Activated CD4-positive, alpha-beta T cell treated with anti-CD3 and anti-CD28 coated beads, Interleukin-2, amount 10 ng/mL, durations not matched to agents 24 days and 14 days (primary cell): ENCODE measurements at regions of chr22 and their contacts with region 1.

Region 1: GRCh38 chr22:46013460-46014416 is 36.8 kb upstream of the WNT7B start:
- DNase-seq: peak; percentile 91
- H3K4me3 Mint-ChIP-seq: peak overlapping the region; percentile 83
- H3K27ac Mint-ChIP-seq: peak overlapping the region; percentile 82
- H3K4me1 Mint-ChIP-seq: peaks cover 7% of the 10 kb centered on the region
- H3K27me3 Mint-ChIP-seq: peaks cover 4% of the 10 kb centered on the region

Region 2: DNA sequence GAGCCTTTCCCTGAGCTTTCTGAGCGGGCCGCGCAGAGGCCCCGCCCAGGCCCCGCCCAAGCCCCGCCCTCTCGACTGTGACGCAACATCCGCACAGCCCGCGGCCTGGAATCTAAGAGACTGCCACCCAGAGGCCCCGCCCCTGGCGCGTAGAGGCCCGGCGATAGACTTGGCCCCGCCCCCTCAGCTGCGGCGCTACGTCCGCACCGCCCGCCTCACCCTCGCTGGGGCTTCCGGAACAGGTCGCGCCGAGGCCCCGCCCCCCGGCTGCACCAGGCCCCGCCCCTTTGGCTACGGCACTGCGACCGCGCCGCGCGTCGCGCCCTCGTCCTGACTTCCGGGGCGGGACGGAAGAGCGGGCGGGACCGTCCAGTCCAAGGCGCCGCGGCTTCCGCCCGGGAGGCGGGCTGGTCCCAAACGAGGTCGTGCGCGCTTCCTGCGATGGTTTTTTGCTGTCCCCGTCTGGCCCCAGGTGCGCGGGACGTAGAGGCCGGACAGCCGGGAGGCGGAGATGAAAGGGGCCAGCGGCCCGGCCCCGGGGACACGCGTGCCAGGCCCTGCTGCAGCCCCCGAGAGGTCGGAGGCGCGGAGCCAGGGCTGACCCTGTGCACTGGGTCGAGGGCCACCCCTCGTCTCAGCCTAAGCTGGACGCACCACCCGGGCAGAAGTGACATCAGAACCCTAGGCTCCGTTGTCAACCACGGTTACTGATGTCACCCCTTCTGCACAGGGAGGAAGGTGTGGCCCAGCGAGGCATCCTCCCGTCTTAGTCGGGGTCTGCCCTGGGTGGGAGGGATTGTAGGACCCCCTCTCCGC is 22.2 kb after region 1 on chr22:
- intact Hi-C with region 1: loop called (anchors 1 kb)
- DNase-seq: peak; percentile 100
- H3K4me3 Mint-ChIP-seq: peak overlapping the region; percentile 84
- H3K27ac Mint-ChIP-seq: peak overlapping the region; percentile 91
- H3K4me1 Mint-ChIP-seq: peaks cover 13% of the 10 kb centered on the region
- H3K27me3 Mint-ChIP-seq: no peaks in the 10 kb centered on the region

Region 3: GRCh38 chr22:46057762-46058420 is 44.2 kb after region 1 on chr22:
- intact Hi-C with region 1: loop called (anchors 1 kb)
- DNase-seq: peak; percentile 87
- H3K4me3 Mint-ChIP-seq: peak overlapping the region; percentile 57
- H3K27ac Mint-ChIP-seq: peak overlapping the region; percentile 73
- H3K4me1 Mint-ChIP-seq: peaks cover 30% of the 10 kb centered on the region
- H3K27me3 Mint-ChIP-seq: no peaks in the 10 kb centered on the region

Region 4: DNA sequence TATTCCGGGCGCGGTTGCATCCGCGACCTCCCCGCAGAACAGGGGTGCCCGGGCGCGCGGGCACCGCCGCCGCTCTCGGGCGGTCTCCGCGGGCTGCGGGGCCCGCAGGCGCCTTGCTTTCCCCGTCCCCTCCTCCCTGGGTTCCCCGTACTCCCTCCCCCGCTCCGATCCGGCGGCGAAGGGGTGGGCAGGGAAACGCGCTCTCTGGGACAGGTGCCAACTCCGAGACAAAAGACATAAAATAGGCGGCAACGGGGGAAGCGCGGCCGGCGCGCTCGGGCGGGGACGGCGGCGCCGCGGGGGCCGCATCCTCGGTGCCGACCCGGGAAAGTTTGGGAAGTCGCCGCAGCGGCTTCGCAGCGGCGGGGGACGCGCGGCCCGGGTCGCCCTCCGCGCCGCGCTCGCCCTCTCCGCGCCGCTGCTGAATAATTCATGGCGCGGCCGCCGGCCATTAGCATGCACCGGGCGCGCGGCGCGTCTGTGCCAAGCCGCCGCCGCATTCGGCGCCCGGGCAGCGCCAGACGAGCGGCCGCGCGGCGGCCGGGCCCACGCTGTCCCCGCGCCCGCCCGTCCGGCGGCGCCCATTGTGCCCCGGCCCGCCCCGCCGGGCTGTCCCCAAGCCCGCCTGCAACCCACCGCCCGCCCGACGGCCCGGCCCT is 57.8 kb after region 1 on chr22:
- intact Hi-C with region 1: loop called (anchors 1 kb)
- DNase-seq: peak; percentile 83
- H3K4me3 Mint-ChIP-seq: peak overlapping the region; percentile 79
- H3K27ac Mint-ChIP-seq: peak overlapping the region; percentile 89
- H3K4me1 Mint-ChIP-seq: peaks cover 27% of the 10 kb centered on the region
- H3K27me3 Mint-ChIP-seq: no peaks in the 10 kb centered on the region